Sigmoid colon (tissue), 7 donors: ENCODE measurements at regions of chr2 and their contacts with region 1.

Region 1: DNA sequence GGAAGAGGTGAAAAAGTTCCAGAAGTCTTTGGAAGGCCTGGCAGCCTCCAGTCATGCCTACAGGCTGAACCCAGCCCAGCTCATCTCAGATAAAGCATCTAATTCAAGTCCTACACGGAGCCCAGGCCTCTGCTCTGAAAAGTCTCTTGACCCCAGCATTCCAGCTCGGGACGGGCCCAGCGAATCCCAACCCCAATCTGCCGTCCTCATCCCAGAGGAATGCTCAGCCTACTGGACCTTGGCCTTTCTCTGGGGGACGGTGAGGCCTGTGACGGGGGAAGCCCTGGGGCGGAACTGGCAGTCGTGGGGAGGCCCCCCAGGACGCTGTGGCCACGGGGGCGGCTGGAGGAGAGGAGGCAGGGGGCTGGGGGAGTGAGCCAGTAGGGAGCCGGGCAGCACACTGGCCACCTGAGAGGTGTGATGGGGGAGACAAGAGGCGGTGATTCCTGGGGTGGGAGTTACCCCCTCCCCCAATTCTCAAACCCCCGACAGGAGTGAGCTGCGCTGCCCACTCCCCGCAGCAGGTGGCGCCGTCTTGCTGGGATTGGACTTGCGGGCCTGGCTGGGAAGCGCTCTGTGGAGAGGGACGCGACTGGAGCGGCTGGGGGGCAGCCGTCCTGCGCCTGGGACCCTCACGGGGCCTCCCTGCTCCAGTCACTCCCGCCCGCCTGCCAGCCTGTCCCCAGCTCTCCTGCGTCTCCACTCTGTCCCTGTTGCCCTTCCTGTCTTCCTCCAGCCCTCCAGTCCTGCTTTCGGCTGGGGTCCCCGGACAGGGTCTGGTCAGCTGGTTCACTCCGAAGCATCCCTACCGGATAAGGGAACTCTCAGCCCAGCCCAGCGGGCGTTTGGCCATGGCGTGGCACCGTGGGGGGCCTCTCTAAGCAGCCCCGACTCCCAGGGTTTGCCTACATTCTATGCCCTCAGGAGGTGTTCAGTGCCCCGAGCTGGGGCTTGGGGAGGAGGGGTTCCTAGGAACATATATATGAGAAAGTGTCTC is 182.6 kb upstream of the HAAO start:
- DNase-seq: peak; percentile 89
- H3K4me3 ChIP-seq: peak overlapping the region; percentile 9 to 49 (median 44)
- H3K27ac ChIP-seq: peak overlapping the region; percentile 26 to 71 (median 66)
- H3K4me1 ChIP-seq: peaks cover 0 to 28% (median 20%) of the 10 kb centered on the region in 4 donors
- H3K27me3 ChIP-seq: no peaks in the 10 kb centered on the region
- CTCF ChIP-seq: peak; percentile 94 to 97 (median 96)
- EP300 ChIP-seq: no peak
- POLR2A ChIP-seq: no peak

Region 2: GRCh38 chr2:43018179-43019024 is 43.4 kb after region 1 on chr2:
- intact Hi-C with region 1: loop called (anchors 2 kb)
- DNase-seq: peak; percentile 98
- H3K4me3 ChIP-seq: no peak overlapping the region
- H3K27ac ChIP-seq: peak overlapping the region; percentile 56 to 75 (median 66)
- H3K4me1 ChIP-seq: peaks cover 0 to 17% (median 13%) of the 10 kb centered on the region in 4 donors
- H3K27me3 ChIP-seq: no peaks in the 10 kb centered on the region
- CTCF ChIP-seq: no peak
- EP300 ChIP-seq: peak in 2 of 4 donors; percentile 30 to 77
- POLR2A ChIP-seq: no peak

Region 3: GRCh38 chr2:43105586-43106558 is 130.9 kb after region 1 on chr2:
- intact Hi-C with region 1: loop called (anchors 5 kb)
- DNase-seq: peak; percentile 90
- H3K4me3 ChIP-seq: no peak overlapping the region
- H3K27ac ChIP-seq: peak overlapping the region; percentile 75 to 86 (median 82)
- H3K4me1 ChIP-seq: peaks cover 0 to 90% (median 68%) of the 10 kb centered on the region in 4 donors
- H3K27me3 ChIP-seq: no peaks in the 10 kb centered on the region
- CTCF ChIP-seq: peak; percentile 46 to 81 (median 74)
- EP300 ChIP-seq: peak in 2 of 4 donors; percentile 31 to 38
- POLR2A ChIP-seq: no peak

Region 4: GRCh38 chr2:43542285-43542937 is 567.4 kb after region 1 on chr2:
- intact Hi-C with region 1: loop called (anchors 5 kb)
- DNase-seq: no peak
- H3K4me3 ChIP-seq: no peak overlapping the region
- H3K27ac ChIP-seq: no peak overlapping the region
- H3K4me1 ChIP-seq: peaks cover 0 to 41% (median 18%) of the 10 kb centered on the region in 4 donors
- H3K27me3 ChIP-seq: no peaks in the 10 kb centered on the region
- CTCF ChIP-seq: peak; percentile 43 to 62 (median 58)
- EP300 ChIP-seq: no peak
- POLR2A ChIP-seq: no peak